Dendritic cell treated with granulocyte-macrophage colony-stimulating factor and Interleukin-4, amounts not matched to agents 40 ng/mL and 50 ng/mL, for 4 days (primary cell): ENCODE measurements at regions of chr10 and their contacts with region 1.

Region 1: GRCh38 chr10:35487336-35488034 is 117.7 kb upstream of the GJD4 start:
- H3K4me3 Mint-ChIP-seq: no peak overlapping the region
- H3K27ac Mint-ChIP-seq: peak overlapping the region; percentile 27
- H3K4me1 Mint-ChIP-seq: peaks cover 53% of the 10 kb centered on the region
- H3K27me3 Mint-ChIP-seq: no peaks in the 10 kb centered on the region

Region 2: GRCh38 chr10:35268791-35269257 is 218.7 kb before region 1 on chr10:
- intact Hi-C with region 1: no loop called
- H3K4me3 Mint-ChIP-seq: no peak overlapping the region
- H3K27ac Mint-ChIP-seq: peak overlapping the region; percentile 41
- H3K4me1 Mint-ChIP-seq: peaks cover 34% of the 10 kb centered on the region
- H3K27me3 Mint-ChIP-seq: peaks cover 10% of the 10 kb centered on the region

Region 3: DNA sequence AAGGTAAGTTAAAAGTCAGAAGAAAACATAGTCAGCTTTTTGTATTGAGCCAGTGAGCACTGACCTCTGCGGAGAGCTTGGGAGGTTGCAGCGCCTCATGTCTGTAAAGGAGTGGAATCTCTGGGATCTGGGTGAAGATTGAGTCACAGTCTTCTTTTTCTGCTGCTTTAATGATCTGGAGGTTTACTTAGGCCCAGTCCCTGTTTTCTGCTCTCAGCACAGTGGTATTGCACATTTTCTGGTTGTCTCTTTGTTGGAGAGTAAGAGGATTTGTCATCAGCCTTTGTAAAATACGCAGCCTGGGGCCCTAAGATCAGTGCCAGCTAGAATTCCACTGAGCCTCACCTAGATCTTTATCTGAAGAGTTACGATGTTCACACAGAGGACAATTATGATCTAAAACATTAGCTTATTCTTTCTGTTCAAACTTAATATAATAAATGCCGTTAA is 59.4 kb after region 1 on chr10:
- intact Hi-C with region 1: loop called (anchors 10 kb)
- H3K4me3 Mint-ChIP-seq: no peak overlapping the region
- H3K27ac Mint-ChIP-seq: no peak overlapping the region
- H3K4me1 Mint-ChIP-seq: peaks cover 11% of the 10 kb centered on the region
- H3K27me3 Mint-ChIP-seq: no peaks in the 10 kb centered on the region